ENCODE measurements at regions of chr9 and their contacts with region 1.

Region 1: GRCh38 chr9:2620919-2621679 is 488 bp upstream of the VLDLR start:
- DNase-seq: peak; percentile 89
- ATAC-seq: peak; percentile 81
- H3K4me3 Mint-ChIP-seq: peak overlapping the region; percentile 90
- H3K27ac Mint-ChIP-seq: peak overlapping the region; percentile 96
- H3K4me1 Mint-ChIP-seq: peaks cover 11% of the 10 kb centered on the region
- H3K27me3 Mint-ChIP-seq: peaks cover 64% of the 10 kb centered on the region

Region 2: DNA sequence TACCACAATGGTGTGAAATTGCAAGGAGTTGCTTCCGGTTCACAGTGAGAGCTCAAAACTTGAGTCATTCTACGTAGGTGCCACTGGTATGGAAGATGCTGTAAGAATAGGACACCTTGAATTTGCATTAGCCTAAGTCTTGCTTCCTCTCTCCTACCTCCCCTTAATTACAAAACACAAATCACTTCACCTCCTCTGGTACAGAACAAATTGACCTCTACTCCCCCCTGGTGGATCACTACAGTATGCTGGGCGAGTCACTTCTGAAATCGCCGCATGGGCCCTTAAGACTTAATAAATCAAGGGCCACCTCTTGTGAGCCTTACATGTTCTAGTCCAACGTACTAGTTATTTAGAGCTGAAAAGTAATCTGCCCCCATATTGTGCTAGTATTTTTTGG is 751.3 kb before region 1 on chr9:
- CTCF ChIA-PET with region 1: no interaction called
- POLR2A ChIA-PET with region 1: no interaction called
- intact Hi-C with region 1: loop called in 1 of 2 experiments (anchors 10 kb)
- DNase-seq: peak; percentile 61
- ATAC-seq: peak; percentile 88
- H3K4me3 Mint-ChIP-seq: no peak overlapping the region
- H3K27ac Mint-ChIP-seq: no peak overlapping the region
- H3K4me1 Mint-ChIP-seq: peaks cover 14% of the 10 kb centered on the region
- H3K27me3 Mint-ChIP-seq: peaks cover 36% of the 10 kb centered on the region

Region 3: DNA sequence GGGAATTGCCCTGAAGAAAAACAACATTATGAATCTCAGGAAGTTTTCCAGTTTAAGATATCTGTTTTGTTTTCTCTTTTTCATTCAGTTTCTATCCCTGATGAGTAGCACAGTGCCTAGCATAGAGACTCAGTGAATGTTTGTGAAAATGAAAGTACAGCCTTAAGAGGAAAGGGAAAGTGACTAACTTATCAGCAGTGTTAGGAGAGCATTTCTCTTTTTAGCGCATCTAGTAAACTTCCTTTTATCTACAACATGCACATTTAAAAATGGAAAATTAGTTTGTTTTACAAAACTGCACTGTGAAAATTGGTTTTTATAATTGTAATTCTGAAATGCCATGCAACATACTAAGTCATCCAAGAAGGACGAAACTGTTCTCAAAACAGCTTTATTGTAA is 495.2 kb before region 1 on chr9:
- CTCF ChIA-PET with region 1: no interaction called
- POLR2A ChIA-PET with region 1: no interaction called
- intact Hi-C with region 1: loop called in 1 of 2 experiments (anchors 10 kb)
- DNase-seq: no peak
- ATAC-seq: peak; percentile 100
- H3K4me3 Mint-ChIP-seq: peak overlapping the region; percentile 22
- H3K27ac Mint-ChIP-seq: peak overlapping the region; percentile 87
- H3K4me1 Mint-ChIP-seq: peaks cover 39% of the 10 kb centered on the region
- H3K27me3 Mint-ChIP-seq: no peaks in the 10 kb centered on the region

Region 4: GRCh38 chr9:2655411-2655901 is 34.4 kb after region 1 on chr9:
- CTCF ChIA-PET with region 1: no interaction called
- POLR2A ChIA-PET with region 1: no interaction called
- intact Hi-C with region 1: loop called (anchors 1 to 5 kb)
- DNase-seq: peak; percentile 61
- ATAC-seq: peak; percentile 97
- H3K4me3 Mint-ChIP-seq: peak overlapping the region; percentile 3
- H3K27ac Mint-ChIP-seq: peak overlapping the region; percentile 80
- H3K4me1 Mint-ChIP-seq: peaks cover 20% of the 10 kb centered on the region
- H3K27me3 Mint-ChIP-seq: no peaks in the 10 kb centered on the region

Region 5: DNA sequence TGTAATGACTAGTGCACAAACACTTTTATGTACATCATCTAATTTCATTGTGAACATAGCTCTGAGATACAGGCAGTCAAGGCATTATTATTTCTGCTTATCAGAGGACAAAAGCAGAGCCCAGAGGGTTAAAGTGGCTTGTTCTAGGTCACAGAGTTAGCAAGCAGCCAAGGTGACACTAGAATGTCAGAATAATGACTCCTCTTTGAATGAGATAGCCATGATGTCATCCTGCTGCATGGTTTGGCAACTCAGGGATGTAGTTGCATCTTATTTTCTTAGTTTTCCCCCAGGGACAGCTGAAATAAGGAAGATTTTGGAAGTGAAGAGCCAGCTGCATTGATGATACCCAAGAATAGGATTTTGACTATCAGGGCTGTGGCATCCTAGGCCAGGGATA is 150.6 kb after region 1 on chr9:
- CTCF ChIA-PET with region 1: no interaction called
- POLR2A ChIA-PET with region 1: no interaction called
- intact Hi-C with region 1: no loop called
- DNase-seq: no peak
- ATAC-seq: no peak
- H3K4me3 Mint-ChIP-seq: no peak overlapping the region
- H3K27ac Mint-ChIP-seq: no peak overlapping the region
- H3K4me1 Mint-ChIP-seq: no peaks in the 10 kb centered on the region
- H3K27me3 Mint-ChIP-seq: no peaks in the 10 kb centered on the region

Region 6: DNA sequence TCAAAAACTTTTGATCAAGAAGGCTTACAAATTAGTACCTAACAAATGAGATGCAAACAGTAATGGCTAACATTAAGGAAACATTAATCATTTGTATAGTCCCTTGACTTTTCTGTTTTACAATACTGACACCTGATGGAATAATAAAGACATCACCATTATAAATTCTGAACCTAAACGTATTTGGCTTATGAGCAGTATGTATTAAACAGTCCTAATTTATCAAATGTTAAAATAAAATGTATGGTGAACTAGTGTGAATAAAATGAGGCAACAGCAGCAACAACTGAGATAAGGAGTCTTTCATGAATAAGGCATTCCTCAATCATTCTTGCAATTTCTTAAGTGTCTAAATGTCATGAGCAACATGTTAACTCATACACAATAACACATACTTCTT is 216.8 kb after region 1 on chr9:
- CTCF ChIA-PET with region 1: no interaction called
- POLR2A ChIA-PET with region 1: no interaction called
- intact Hi-C with region 1: loop called in 1 of 2 experiments (anchors 5 kb)
- DNase-seq: no peak
- ATAC-seq: no peak
- H3K4me3 Mint-ChIP-seq: no peak overlapping the region
- H3K27ac Mint-ChIP-seq: peak overlapping the region; percentile 77
- H3K4me1 Mint-ChIP-seq: peaks cover 15% of the 10 kb centered on the region
- H3K27me3 Mint-ChIP-seq: no peaks in the 10 kb centered on the region

Measured in activated CD4-positive, alpha-beta T cell treated with anti-CD3 and anti-CD28 coated beads for 36 hours (primary cell).